ENCODE measurements at regions of chr11 and their contacts with region 1.

Region 1: GRCh38 chr11:1694064-1694845 is 2.7 kb upstream of the KRTAP5-6 start:
- DNase-seq: peak; percentile 85
- H3K4me3 Mint-ChIP-seq: no peak overlapping the region
- H3K27ac Mint-ChIP-seq: no peak overlapping the region
- H3K4me1 Mint-ChIP-seq: peaks cover 6% of the 10 kb centered on the region
- H3K27me3 Mint-ChIP-seq: peaks cover 27% of the 10 kb centered on the region

Region 2: GRCh38 chr11:1679881-1680280 is 14.4 kb before region 1 on chr11:
- CTCF ChIA-PET with region 1: interaction called, 28 read pairs
- POLR2A ChIA-PET with region 1: no interaction called
- intact Hi-C with region 1: no loop called
- DNase-seq: no peak
- H3K4me3 Mint-ChIP-seq: no peak overlapping the region
- H3K27ac Mint-ChIP-seq: no peak overlapping the region
- H3K4me1 Mint-ChIP-seq: no peaks in the 10 kb centered on the region
- H3K27me3 Mint-ChIP-seq: peaks cover 20% of the 10 kb centered on the region

Region 3: GRCh38 chr11:1736447-1737201 is 42.4 kb after region 1 on chr11:
- CTCF ChIA-PET with region 1: interaction called, 10 read pairs
- POLR2A ChIA-PET with region 1: no interaction called
- intact Hi-C with region 1: no loop called
- DNase-seq: no peak
- H3K4me3 Mint-ChIP-seq: no peak overlapping the region
- H3K27ac Mint-ChIP-seq: no peak overlapping the region
- H3K4me1 Mint-ChIP-seq: peaks cover 4% of the 10 kb centered on the region
- H3K27me3 Mint-ChIP-seq: peaks cover 25% of the 10 kb centered on the region

Region 4: GRCh38 chr11:1807264-1807995 is 113.2 kb after region 1 on chr11:
- CTCF ChIA-PET with region 1: interaction called, 27 read pairs
- POLR2A ChIA-PET with region 1: no interaction called
- intact Hi-C with region 1: no loop called
- DNase-seq: no peak
- H3K4me3 Mint-ChIP-seq: no peak overlapping the region
- H3K27ac Mint-ChIP-seq: no peak overlapping the region
- H3K4me1 Mint-ChIP-seq: no peaks in the 10 kb centered on the region
- H3K27me3 Mint-ChIP-seq: peaks cover 11% of the 10 kb centered on the region

Region 5: DNA sequence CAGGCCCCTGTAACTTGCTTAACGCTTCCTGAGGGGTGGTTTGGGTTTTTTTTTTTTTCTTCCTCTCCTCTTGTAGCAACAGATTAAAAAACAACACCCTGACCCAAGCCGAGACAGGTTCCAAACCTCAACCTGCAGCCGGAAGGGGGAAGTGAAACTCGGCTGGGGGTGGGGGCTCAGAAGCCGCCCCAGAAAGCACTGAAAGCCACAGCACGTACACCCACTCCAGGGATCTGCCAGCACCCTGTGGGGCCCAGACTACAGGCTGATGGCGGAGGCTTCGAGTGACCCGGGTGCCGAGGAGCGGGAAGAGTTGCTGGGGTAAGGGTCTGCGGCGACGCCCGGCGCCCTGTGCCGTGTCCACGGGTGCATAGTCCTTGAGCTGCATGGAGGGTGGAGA is 158.6 kb after region 1 on chr11 and contains the start of gene LSP1:
- CTCF ChIA-PET with region 1: interaction called, 11 read pairs
- POLR2A ChIA-PET with region 1: no interaction called
- intact Hi-C with region 1: no loop called
- DNase-seq: peak; percentile 93
- H3K4me3 Mint-ChIP-seq: peak within 1 kb of the TSS; percentile 92
- H3K27ac Mint-ChIP-seq: peak within 1 kb of the TSS; percentile 97
- H3K4me1 Mint-ChIP-seq: peaks cover 66% of the 10 kb centered on the region
- H3K27me3 Mint-ChIP-seq: no peaks in the 10 kb centered on the region
- total RNA-seq, gene LSP1: 179 to 181 TPM

Region 6: DNA sequence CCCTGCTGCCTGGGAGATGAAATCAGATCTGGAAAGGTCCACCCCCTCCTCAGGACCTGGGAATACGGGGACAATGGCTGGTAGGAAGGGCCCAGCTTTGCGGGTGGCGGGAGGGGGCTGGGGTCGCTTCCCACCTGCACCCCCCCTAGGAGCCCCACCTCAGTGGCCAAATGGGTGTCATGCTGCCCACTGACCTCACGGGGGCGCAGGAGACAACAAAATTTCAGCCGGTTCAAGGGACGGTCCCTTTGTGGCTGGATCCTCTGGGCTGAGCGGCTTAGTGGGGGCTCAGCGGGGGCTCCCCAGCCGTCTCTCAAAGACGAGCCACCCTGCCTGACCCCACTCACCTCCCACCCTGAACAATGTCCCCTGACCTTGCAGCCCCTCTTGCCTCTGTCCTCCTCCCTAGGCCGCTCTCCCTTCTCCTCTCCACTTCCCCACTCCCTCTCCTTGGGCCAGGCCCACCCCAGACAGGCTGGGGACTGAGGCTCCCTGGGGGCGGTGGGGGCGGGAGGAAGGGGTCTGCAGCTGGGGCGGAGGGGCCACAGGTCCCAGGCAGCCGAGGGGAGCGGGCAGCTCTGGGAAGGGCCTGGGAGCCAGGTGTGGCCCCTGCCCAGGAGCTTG is 342.7 kb after region 1 on chr11:
- CTCF ChIA-PET with region 1: interaction called, 10 read pairs
- POLR2A ChIA-PET with region 1: no interaction called
- intact Hi-C with region 1: no loop called
- DNase-seq: no peak
- H3K4me3 Mint-ChIP-seq: no peak overlapping the region
- H3K27ac Mint-ChIP-seq: no peak overlapping the region
- H3K4me1 Mint-ChIP-seq: no peaks in the 10 kb centered on the region
- H3K27me3 Mint-ChIP-seq: no peaks in the 10 kb centered on the region

Region 7: GRCh38 chr11:2992234-2992996 is 1298.2 kb after region 1 on chr11 and contains the start of gene NAP1L4:
- CTCF ChIA-PET with region 1: no interaction called
- POLR2A ChIA-PET with region 1: no interaction called
- intact Hi-C with region 1: no loop called
- DNase-seq: peak; percentile 98
- H3K4me3 Mint-ChIP-seq: peak within 1 kb of the TSS; percentile 99
- H3K27ac Mint-ChIP-seq: peak within 1 kb of the TSS; percentile 100
- H3K4me1 Mint-ChIP-seq: peaks cover 28% of the 10 kb centered on the region
- H3K27me3 Mint-ChIP-seq: no peaks in the 10 kb centered on the region
- total RNA-seq, gene NAP1L4: 261 to 263 TPM